Kidney (tissue), 22 donors: ENCODE measurements at regions of chr6 and their contacts with region 1.

Region 1: GRCh38 chr6:53018446-53018845 is 23.4 kb upstream of the GSTA4 start:
- DNase-seq: no peak
- H3K4me3 ChIP-seq: no peak overlapping the region
- H3K27ac ChIP-seq: no peak overlapping the region
- H3K4me1 ChIP-seq: no peaks in the 10 kb centered on the region
- H3K27me3 ChIP-seq: no peaks in the 10 kb centered on the region
- CTCF ChIP-seq: no peak

Region 2: DNA sequence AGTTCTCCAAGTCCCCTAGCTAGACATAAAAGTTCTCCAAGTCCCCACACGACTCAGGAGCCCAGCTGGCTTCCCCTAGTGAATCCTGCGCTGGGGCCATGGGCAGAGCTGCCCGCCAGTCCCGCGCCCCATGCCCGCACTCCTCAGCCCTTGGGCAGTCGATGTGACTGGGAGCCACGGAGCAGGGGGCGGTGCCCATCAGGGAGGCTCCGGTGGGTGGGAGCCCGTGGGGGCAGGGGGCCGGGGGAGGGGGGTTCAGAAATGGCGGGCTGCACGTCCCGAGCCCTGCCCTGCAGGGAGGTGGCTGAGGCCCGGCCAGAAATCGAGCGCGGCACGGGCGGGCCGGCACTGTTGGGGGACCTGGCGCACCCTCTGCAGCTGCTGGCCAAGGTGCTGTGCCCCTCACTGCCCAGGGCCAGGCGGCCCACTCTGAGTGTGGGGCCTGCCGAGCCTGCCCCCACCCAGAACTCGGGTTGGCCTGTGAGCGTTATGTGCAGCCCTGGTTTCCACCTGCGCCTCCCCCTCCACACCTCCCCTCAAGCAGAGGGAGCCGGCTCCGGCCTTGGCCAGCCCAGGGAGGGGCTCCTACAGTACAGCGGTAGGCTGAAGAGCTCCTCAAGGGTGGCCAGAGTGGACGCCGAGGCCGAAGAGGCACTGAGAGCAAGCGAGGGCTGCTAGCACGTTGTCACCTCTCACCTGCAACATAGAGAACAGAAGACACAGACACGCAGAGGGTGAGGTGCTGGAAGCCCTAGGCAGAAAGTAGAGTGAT is 189.2 kb before region 1 on chr6:
- intact Hi-C with region 1: no loop called
- DNase-seq: peak in 1 of 5 donors; percentile 69
- H3K4me3 ChIP-seq: no peak overlapping the region
- H3K27ac ChIP-seq: no peak overlapping the region
- H3K4me1 ChIP-seq: no peaks in the 10 kb centered on the region
- H3K27me3 ChIP-seq: no peaks in the 10 kb centered on the region
- CTCF ChIP-seq: no peak

Region 3: DNA sequence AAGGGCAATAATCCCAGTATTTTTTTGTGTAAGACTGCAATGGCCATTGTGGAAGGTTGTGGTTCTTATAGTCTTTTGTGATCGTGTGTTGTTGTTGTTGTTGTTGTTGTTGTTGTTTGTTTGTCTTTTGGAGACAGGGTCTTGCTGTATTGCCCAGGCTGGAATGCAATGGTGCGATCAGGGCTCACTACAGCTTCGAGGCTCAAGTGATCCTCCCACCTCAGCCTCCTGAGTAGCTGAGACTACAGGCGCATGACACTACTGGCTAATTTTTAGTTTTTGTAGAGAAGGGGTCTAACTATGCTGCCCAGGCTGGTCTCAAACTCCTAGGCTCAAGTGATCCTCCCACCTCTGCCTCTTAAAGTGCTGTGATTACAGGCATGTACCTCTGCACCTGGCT is 19.8 kb before region 1 on chr6:
- intact Hi-C with region 1: loop called (anchors 2 kb)
- DNase-seq: no peak
- H3K4me3 ChIP-seq: no peak overlapping the region
- H3K27ac ChIP-seq: no peak overlapping the region
- H3K4me1 ChIP-seq: peaks cover 0 to 2% (median 0%) of the 10 kb centered on the region in 3 donors
- H3K27me3 ChIP-seq: no peaks in the 10 kb centered on the region
- CTCF ChIP-seq: no peak